ENCODE measurements at regions of chr2 and their contacts with region 1.

Region 1: GRCh38 chr2:20438334-20439192 is 8.3 kb upstream of the RHOB start:
- DNase-seq: peak in 1 of 5 donors; percentile 50
- ATAC-seq: peak; percentile 49 to 86 (median 81)
- H3K4me3 ChIP-seq: peak overlapping the region in 1 of 12 donors; percentile 3
- H3K27ac ChIP-seq: peak overlapping the region in 10 of 12 donors; percentile 27 to 92 (median 54)
- H3K4me1 ChIP-seq: peaks cover 0 to 33% (median 8%) of the 10 kb centered on the region in 12 donors
- H3K27me3 ChIP-seq: no peaks in the 10 kb centered on the region
- CTCF ChIP-seq: no peak
- POLR2A ChIP-seq: peak in 1 of 2 donors; percentile 60

Region 2: GRCh38 chr2:20411361-20411894 is 27.1 kb before region 1 on chr2:
- intact Hi-C with region 1: loop called in 1 of 10 experiments (anchors 2 kb)
- DNase-seq: peak; percentile 83 to 92 (median 86)
- ATAC-seq: peak; percentile 82 to 98 (median 97)
- H3K4me3 ChIP-seq: no peak overlapping the region
- H3K27ac ChIP-seq: no peak overlapping the region
- H3K4me1 ChIP-seq: peaks cover 0 to 5% (median 0%) of the 10 kb centered on the region in 12 donors
- H3K27me3 ChIP-seq: no peaks in the 10 kb centered on the region
- CTCF ChIP-seq: peak; percentile 73 to 87 (median 83)
- POLR2A ChIP-seq: no peak

Region 3: DNA sequence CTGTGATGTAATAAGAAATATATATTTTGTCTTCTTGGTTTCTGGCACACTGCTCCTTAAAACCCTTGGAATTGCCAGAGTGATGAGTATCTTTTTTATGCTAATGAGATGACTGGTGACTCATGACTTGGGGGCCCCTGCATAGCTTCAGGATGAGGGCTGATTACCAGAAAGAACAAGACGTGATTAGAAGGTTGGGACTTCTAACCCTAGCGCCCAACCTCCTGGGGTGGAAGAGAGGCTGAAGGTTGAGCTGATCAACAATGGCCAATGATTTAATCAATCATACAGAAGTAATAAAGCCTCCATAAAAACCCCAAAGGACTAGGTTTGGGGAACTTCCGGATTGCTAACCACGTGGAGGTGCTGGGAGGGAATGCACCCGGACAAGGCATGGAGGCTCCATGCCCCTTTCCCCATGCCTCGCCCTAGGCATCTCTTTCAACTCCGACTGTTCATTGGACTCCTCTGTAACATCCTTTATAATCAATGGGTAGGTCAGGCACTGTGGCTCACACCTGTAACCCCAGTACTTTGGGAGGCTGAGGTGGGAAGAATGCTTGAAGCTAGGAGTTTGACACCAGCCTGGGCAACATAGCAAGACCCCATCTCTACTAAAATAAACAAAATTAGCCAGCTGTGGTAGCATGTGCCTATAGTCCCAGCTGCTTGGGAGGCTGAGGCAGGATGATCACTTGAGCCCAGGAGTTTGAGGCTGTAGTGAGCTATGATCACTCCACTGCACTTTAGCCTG is 123.3 kb after region 1 on chr2:
- intact Hi-C with region 1: no loop called
- DNase-seq: peak in 1 of 5 donors; percentile 7
- ATAC-seq: no peak
- H3K4me3 ChIP-seq: no peak overlapping the region
- H3K27ac ChIP-seq: no peak overlapping the region
- H3K4me1 ChIP-seq: peaks cover 0 to 15% (median 4%) of the 10 kb centered on the region in 12 donors
- H3K27me3 ChIP-seq: no peaks in the 10 kb centered on the region
- CTCF ChIP-seq: no peak
- POLR2A ChIP-seq: no peak

Region 4: DNA sequence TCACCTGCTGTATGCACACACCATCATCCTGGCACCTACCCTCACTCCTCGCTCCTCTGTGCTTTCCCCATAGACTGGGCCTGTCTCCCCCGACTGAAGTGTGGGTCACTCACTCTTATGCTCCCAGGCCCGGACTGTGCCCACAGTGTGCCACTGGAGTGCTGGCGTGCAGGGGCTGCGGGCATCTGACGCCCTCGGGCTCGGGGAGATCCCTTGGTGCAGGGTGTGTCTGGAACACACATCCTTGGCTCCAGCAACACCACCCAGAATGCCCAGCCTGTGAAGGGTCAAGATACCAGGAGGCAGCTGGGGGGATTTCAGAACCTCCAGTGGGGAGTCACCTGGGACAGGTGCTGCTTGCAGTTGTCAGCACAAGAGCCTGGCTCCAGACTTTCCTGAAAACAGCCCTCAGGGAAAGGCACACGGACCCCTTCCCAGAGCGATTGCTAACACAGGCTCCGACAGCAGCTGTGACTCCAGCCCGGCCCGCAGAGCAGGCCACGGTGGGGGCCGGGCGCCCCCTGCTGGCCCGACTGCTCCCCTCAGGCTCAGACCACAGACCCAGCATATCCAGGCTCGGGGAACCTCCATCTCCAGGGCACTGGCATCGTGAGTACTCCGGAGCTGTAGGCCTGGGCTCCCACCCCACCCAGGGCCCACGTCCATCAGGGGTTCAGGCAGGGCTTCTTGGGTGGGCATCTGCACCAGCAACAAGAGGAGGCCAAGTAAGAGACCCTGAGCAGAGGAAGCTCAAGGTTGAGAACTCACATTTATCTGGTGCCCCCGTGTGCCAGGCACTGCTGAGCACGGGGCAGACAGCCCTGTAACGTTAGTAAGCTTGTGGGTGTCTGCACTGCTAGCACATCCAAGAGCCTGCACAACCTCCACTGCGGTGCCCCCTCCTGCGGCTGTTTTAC is 203.8 kb after region 1 on chr2:
- intact Hi-C with region 1: loop called in 6 of 10 experiments (anchors 2 to 5 kb)
- DNase-seq: peak; percentile 76 to 89 (median 79)
- ATAC-seq: peak; percentile 82 to 91 (median 88)
- H3K4me3 ChIP-seq: no peak overlapping the region
- H3K27ac ChIP-seq: peak overlapping the region in 6 of 12 donors; percentile 1 to 90 (median 52)
- H3K4me1 ChIP-seq: peaks cover 5 to 45% (median 23%) of the 10 kb centered on the region in 12 donors
- H3K27me3 ChIP-seq: no peaks in the 10 kb centered on the region
- CTCF ChIP-seq: peak; percentile 88 to 98 (median 96)
- POLR2A ChIP-seq: peak in 1 of 2 donors; percentile 15